ENCODE measurements at regions of chr15 and their contacts with region 1.

Region 1: DNA sequence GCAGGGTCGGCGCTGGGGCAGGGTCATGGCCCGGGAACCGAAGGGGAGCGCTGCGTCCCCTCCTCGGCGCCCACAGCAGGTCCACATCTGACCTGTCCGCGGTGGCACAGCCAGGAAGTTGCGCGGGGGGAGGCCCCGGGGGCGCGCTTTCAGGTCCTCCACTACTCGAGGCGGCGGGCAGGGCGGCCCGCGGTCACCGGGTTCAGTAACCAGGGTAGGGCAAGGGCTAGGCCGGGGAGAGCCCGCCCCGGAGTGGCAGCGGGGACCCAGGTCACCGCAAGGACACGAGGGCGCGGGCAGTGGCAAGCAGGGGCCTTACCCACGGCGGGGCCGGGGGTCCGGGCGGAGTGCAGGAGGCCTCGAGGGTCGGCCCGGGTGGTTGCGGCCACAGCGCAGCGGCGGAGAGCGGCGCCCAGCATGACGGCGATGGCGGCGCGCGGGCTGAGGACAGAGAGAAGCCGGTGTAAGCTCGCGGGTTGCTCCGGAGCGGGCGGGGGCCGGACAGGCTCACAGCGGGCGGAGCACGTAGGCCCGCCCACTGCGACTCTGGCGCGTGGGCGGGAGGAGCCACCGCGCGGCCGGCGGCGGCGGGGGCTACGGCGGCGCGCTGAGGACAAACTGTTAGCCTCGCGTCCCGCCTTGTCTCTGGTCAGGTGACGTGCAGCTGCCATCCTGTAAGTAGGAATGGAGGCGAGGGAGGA is at the start of gene COX5A:
- DNase-seq: peak; percentile 83 to 97 (median 88)
- ATAC-seq: peak; percentile 95
- H3K4me3 ChIP-seq: peak within 1 kb of the TSS; percentile 82
- H3K4me3 Mint-ChIP-seq: peak within 1 kb of the TSS; percentile 98
- H3K27ac ChIP-seq: peak within 1 kb of the TSS; percentile 58 to 74
- H3K27ac Mint-ChIP-seq: peak within 1 kb of the TSS; percentile 86
- H3K4me1 ChIP-seq: peaks cover 37% of the 10 kb centered on the region
- H3K4me1 Mint-ChIP-seq: peaks cover 28% of the 10 kb centered on the region
- H3K27me3 ChIP-seq: no peaks in the 10 kb centered on the region
- H3K27me3 Mint-ChIP-seq: no peaks in the 10 kb centered on the region
- CTCF ChIP-seq: no peak
- total RNA-seq, gene COX5A: 40.7 to 44.2 TPM

Region 2: DNA sequence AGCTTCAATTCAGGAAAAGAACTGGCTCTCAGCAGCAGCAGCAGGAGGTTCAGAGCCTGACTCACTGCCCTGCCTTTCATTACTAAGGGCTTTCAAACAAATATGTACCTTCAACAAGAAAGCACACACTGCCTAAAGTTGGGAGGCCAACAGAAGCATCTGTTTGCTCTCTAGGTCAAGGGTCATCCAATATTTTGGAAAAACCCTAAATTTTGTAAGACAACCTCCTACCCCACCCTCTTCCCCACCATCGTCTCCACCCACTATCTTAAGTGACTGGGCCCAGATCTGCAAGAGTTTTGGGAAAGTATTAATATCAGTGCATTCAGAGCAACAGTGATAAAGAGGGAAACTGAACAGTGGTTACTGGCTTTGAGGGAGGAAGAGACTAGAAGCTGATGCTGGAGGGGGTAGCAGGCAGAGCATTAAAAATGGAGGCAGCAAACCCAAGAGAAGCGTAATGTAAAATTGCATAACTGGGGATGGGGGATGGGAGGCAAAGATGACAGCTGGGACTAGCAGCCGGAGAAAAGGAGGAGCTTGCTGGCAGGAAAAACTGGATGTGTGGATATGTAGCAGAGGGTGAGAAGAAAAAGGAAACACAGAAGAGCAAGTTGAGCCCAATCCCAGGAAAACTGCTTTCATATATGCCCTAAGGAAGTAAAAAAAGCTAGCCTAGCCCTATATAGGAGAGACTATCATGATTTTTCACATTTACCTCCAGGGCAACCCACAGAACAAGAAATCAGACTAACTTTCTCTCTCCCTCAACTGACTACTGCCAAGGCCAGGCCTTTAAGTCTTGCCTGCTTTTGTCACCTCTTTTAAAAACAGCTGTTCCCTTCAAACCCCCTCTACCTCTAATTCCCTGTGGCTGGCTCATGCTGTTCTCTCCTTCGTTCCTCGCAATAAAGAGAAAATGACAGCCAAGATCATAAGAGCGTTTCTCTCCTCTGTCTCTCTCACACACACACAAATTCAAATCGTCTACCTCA is 1336.0 kb before region 1 on chr15:
- CTCF ChIA-PET with region 1: no interaction called
- POLR2A ChIA-PET with region 1: no interaction called
- intact Hi-C with region 1: no loop called
- DNase-seq: no peak
- ATAC-seq: no peak
- H3K4me3 ChIP-seq: no peak overlapping the region
- H3K4me3 Mint-ChIP-seq: no peak overlapping the region
- H3K27ac ChIP-seq: no peak overlapping the region
- H3K27ac Mint-ChIP-seq: no peak overlapping the region
- H3K4me1 ChIP-seq: peaks cover 15% of the 10 kb centered on the region
- H3K4me1 Mint-ChIP-seq: peaks cover 35% of the 10 kb centered on the region
- H3K27me3 ChIP-seq: no peaks in the 10 kb centered on the region
- H3K27me3 Mint-ChIP-seq: no peaks in the 10 kb centered on the region
- CTCF ChIP-seq: no peak

Region 3: GRCh38 chr15:74384854-74385643 is 552.7 kb before region 1 on chr15:
- CTCF ChIA-PET with region 1: no interaction called
- POLR2A ChIA-PET with region 1: no interaction called
- intact Hi-C with region 1: no loop called
- DNase-seq: peak in 6 of 14 experiments; percentile 15 to 65 (median 48)
- ATAC-seq: peak; percentile 53
- H3K4me3 ChIP-seq: no peak overlapping the region
- H3K4me3 Mint-ChIP-seq: no peak overlapping the region
- H3K27ac ChIP-seq: peak overlapping the region in 1 of 2 donors; percentile 3
- H3K27ac Mint-ChIP-seq: no peak overlapping the region
- H3K4me1 ChIP-seq: peaks cover 36% of the 10 kb centered on the region
- H3K4me1 Mint-ChIP-seq: peaks cover 19% of the 10 kb centered on the region
- H3K27me3 ChIP-seq: no peaks in the 10 kb centered on the region
- H3K27me3 Mint-ChIP-seq: no peaks in the 10 kb centered on the region
- CTCF ChIP-seq: no peak

Region 4: DNA sequence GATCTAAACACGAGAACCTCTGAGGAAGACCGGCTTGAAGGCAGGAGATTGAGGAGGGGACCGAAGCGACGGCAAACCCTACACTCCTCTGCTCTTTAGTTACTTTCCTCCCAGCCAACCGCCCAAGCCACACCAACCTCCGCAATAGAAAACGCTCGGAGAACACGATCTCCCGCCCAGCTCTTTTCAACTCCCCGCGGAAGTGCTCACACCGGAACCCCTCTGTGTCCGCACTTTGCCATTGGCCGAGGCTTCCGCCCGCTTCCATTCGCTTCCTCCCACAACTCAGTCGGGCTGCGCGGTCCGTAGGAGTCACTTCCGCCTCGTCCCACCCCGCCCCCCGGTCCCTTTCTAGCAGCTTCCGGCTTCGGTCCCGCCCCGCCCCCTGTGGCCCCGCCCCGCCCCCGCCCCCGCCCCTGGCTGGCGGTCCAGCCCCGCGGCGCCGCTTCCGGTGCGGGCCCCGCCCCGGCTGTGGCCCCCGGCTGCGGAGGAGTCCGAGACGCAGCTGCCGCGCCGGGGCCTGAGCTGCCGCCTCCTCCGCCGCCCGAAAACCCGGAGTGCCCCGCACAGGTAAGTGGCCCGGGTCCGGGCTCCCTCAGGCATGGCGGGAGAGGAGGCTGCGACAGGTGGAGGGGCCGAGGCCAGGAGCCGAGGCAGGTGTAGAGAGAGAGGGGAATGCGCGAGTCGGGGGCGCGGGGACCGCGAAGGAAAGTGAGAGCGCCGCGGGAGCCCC is 396.8 kb before region 1 on chr15 and contains the start of gene ARID3B:
- CTCF ChIA-PET with region 1: no interaction called
- POLR2A ChIA-PET with region 1: interaction called, 3 read pairs
- intact Hi-C with region 1: loop called (anchors 2 to 10 kb)
- DNase-seq: peak; percentile 90 to 98 (median 94)
- ATAC-seq: peak; percentile 82
- H3K4me3 ChIP-seq: peak within 1 kb of the TSS; percentile 100
- H3K4me3 Mint-ChIP-seq: peak within 1 kb of the TSS; percentile 95
- H3K27ac ChIP-seq: peak within 1 kb of the TSS; percentile 82 to 85
- H3K27ac Mint-ChIP-seq: peak within 1 kb of the TSS; percentile 91
- H3K4me1 ChIP-seq: peaks cover 44% of the 10 kb centered on the region
- H3K4me1 Mint-ChIP-seq: peaks cover 52% of the 10 kb centered on the region
- H3K27me3 ChIP-seq: no peaks in the 10 kb centered on the region
- H3K27me3 Mint-ChIP-seq: no peaks in the 10 kb centered on the region
- CTCF ChIP-seq: no peak
- total RNA-seq, gene ARID3B: 25.0 to 27.9 TPM

Region 5: GRCh38 chr15:74695597-74696397 is 241.9 kb before region 1 on chr15 and contains the start of gene EDC3:
- CTCF ChIA-PET with region 1: no interaction called
- POLR2A ChIA-PET with region 1: no interaction called
- intact Hi-C with region 1: loop called in 1 of 2 experiments (anchors 10 kb)
- DNase-seq: peak; percentile 70 to 93 (median 80)
- ATAC-seq: peak; percentile 86
- H3K4me3 ChIP-seq: peak within 1 kb of the TSS; percentile 78
- H3K4me3 Mint-ChIP-seq: peak within 1 kb of the TSS; percentile 100
- H3K27ac ChIP-seq: peak within 1 kb of the TSS; percentile 60 to 83
- H3K27ac Mint-ChIP-seq: peak within 1 kb of the TSS; percentile 98
- H3K4me1 ChIP-seq: peaks cover 16% of the 10 kb centered on the region
- H3K4me1 Mint-ChIP-seq: peaks cover 44% of the 10 kb centered on the region
- H3K27me3 ChIP-seq: no peaks in the 10 kb centered on the region
- H3K27me3 Mint-ChIP-seq: peaks cover under 1% of the 10 kb centered on the region
- CTCF ChIP-seq: no peak
- total RNA-seq, gene EDC3: 11.0 to 11.1 TPM

Region 6: GRCh38 chr15:74873036-74873755 is 64.5 kb before region 1 on chr15 and contains the start of gene SCAMP2:
- CTCF ChIA-PET with region 1: no interaction called
- POLR2A ChIA-PET with region 1: interaction called, 6 read pairs
- intact Hi-C with region 1: loop called in 1 of 2 experiments (anchors 2 kb)
- DNase-seq: peak; percentile 79 to 95 (median 86)
- ATAC-seq: peak; percentile 90
- H3K4me3 ChIP-seq: peak within 1 kb of the TSS; percentile 65
- H3K4me3 Mint-ChIP-seq: peak within 1 kb of the TSS; percentile 94
- H3K27ac ChIP-seq: peak within 1 kb of the TSS; percentile 93 to 94
- H3K27ac Mint-ChIP-seq: peak within 1 kb of the TSS; percentile 90
- H3K4me1 ChIP-seq: peaks cover 50% of the 10 kb centered on the region
- H3K4me1 Mint-ChIP-seq: peaks cover 45% of the 10 kb centered on the region
- H3K27me3 ChIP-seq: no peaks in the 10 kb centered on the region
- H3K27me3 Mint-ChIP-seq: no peaks in the 10 kb centered on the region
- CTCF ChIP-seq: no peak
- total RNA-seq, gene SCAMP2: 56.1 to 56.9 TPM

Region 7: DNA sequence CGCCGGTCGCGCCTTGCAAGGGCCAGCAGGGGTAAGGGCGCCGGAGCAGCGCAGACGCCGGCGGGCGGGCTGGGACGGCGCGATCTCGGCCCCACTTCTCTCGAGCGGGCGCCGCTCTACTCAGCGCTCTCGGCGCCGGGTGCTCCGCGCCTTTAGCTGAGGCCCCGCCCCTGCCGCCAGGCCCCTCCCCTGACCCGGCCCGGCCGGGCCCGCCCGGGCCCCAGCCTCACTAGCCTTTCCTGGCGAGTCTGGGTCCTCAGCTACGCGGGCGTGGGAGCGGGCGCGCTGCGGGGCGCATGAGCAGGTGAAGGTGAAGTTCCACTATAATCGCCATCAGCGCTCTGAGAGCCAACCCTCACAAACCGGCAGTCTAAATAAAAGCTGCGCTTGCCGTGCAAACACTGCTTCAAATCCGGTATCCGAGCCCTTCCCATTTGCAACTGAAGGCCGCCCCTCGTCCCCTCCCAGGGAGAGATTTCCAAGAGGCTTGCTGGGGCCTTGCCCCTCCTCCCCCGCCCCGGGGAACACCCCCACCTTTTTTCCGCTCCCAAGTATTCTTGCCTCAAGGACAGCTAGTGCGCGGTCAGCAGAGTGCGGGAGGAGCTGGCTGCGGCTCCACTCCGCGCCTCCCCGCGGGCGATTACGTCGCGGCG is 19.0 kb after region 1 on chr15 and contains the start of gene RPP25:
- CTCF ChIA-PET with region 1: interaction called, 5 read pairs
- POLR2A ChIA-PET with region 1: interaction called, 11 read pairs
- intact Hi-C with region 1: loop called in 1 of 2 experiments (anchors 2 kb)
- DNase-seq: peak; percentile 24 to 78 (median 62)
- ATAC-seq: peak; percentile 84
- H3K4me3 ChIP-seq: peak within 1 kb of the TSS; percentile 60
- H3K4me3 Mint-ChIP-seq: peak within 1 kb of the TSS; percentile 83
- H3K27ac ChIP-seq: no peak within 1 kb of the TSS
- H3K27ac Mint-ChIP-seq: no peak within 1 kb of the TSS
- H3K4me1 ChIP-seq: peaks cover 41% of the 10 kb centered on the region
- H3K4me1 Mint-ChIP-seq: peaks cover 21% of the 10 kb centered on the region
- H3K27me3 ChIP-seq: peaks cover 36 to 37% of the 10 kb centered on the region in 2 experiments
- H3K27me3 Mint-ChIP-seq: peaks cover 35% of the 10 kb centered on the region
- CTCF ChIP-seq: no peak
- total RNA-seq, gene RPP25: 0.14 to 0.45 TPM

Region 8: GRCh38 chr15:75178171-75179075 is 240.7 kb after region 1 on chr15:
- CTCF ChIA-PET with region 1: no interaction called
- POLR2A ChIA-PET with region 1: no interaction called
- intact Hi-C with region 1: no loop called
- DNase-seq: peak in 1 of 14 experiments; percentile 13
- ATAC-seq: no peak
- H3K4me3 ChIP-seq: peak overlapping the region; percentile 19
- H3K4me3 Mint-ChIP-seq: no peak overlapping the region
- H3K27ac ChIP-seq: no peak overlapping the region
- H3K27ac Mint-ChIP-seq: no peak overlapping the region
- H3K4me1 ChIP-seq: peaks cover 10% of the 10 kb centered on the region
- H3K4me1 Mint-ChIP-seq: peaks cover 11% of the 10 kb centered on the region
- H3K27me3 ChIP-seq: peaks cover 23 to 36% of the 10 kb centered on the region in 2 experiments
- H3K27me3 Mint-ChIP-seq: peaks cover 53% of the 10 kb centered on the region
- CTCF ChIP-seq: no peak

Region 9: GRCh38 chr15:75201609-75202250 is 264.0 kb after region 1 on chr15 and contains the start of gene C15orf39:
- CTCF ChIA-PET with region 1: no interaction called
- POLR2A ChIA-PET with region 1: interaction called, 6 read pairs
- intact Hi-C with region 1: loop called in 1 of 2 experiments (anchors 5 kb)
- DNase-seq: peak; percentile 45 to 89 (median 69)
- ATAC-seq: peak; percentile 53
- H3K4me3 ChIP-seq: peak within 1 kb of the TSS; percentile 73
- H3K4me3 Mint-ChIP-seq: peak within 1 kb of the TSS; percentile 96
- H3K27ac ChIP-seq: peak within 1 kb of the TSS; percentile 44 to 88
- H3K27ac Mint-ChIP-seq: peak within 1 kb of the TSS; percentile 96
- H3K4me1 ChIP-seq: peaks cover 57% of the 10 kb centered on the region
- H3K4me1 Mint-ChIP-seq: peaks cover 37% of the 10 kb centered on the region
- H3K27me3 ChIP-seq: no peaks in the 10 kb centered on the region
- H3K27me3 Mint-ChIP-seq: no peaks in the 10 kb centered on the region
- CTCF ChIP-seq: peak; percentile 80
- total RNA-seq, gene C15orf39: 41.6 to 42.1 TPM